PC-3 (cell line): ENCODE measurements at regions of chr2 and their contacts with region 1.

Region 1: DNA sequence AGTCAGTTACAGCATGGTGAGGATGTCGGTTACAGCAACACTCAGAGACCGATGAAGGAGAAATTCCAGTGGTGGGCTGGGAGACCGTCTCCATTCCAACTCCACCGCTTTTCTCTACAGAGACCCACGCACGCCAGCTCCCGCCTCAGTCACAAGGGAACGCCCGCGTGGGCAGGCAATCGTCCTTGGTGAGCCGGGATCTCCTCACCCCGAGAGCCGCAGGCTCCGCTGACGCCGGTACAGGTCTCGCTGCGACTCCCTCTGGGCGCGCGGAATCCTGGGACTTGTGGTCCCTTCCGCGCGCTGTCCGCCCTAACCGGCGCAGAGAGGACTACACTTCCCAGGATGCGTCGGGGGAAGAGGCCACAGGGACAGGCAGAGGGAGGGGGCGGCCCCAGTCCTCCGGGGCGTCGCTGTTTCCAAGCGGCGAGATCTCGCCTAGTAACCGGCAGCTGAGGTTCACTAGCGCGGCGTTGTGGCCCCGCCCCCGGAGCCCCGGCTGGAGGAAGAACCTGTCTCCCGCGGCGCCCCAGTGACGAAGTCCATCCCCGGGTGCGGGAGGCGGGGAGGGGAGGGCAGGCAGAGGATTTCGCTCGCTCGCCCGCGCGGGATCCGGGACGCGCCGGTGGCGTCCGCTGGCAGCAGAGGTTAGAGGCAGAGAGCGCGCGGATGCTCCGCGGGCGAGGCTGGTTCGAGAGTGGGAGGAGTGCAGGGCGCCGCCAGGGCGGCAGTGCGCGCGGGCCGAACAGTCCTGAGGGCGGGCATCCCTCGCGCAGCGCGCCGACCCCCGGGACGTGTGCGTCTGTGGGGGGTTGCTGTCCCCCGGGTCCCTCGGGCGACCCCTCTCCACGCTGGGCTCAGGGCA is at the start of gene EML6:
- DNase-seq: peak; percentile 99
- ATAC-seq: peak; percentile 95
- H3K4me3 ChIP-seq: peak within 1 kb of the TSS; percentile 83
- H3K27ac ChIP-seq: peak within 1 kb of the TSS; percentile 46
- H3K4me1 ChIP-seq: peaks cover 26% of the 10 kb centered on the region
- H3K27me3 ChIP-seq: no peaks in the 10 kb centered on the region
- CTCF ChIP-seq: peak; percentile 38
- total RNA-seq, gene EML6: 5.3 and 15.7 TPM in 2 replicates

Region 2: DNA sequence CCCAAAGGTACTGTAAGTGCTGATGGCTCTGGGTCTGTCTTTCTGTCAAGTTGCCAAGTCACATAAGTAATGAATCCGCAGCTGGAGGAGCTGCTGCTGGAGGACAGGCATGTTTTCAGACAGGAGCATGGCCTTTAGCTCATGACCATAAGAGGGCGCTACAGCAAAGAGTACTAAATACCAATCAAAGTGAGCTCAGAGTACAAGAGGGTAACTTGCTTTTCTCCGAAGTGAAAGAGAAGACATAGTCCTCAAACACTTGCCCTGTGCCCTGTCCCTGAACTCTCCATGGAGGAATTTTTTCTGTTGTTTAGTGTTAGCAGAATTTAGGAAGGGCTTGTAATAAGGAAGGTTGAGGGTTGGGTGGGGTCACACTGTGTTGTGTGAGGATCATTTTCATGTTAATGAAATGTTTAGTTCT is 57.9 kb before region 1 on chr2:
- CTCF ChIA-PET with region 1: no interaction called
- POLR2A ChIA-PET with region 1: no interaction called
- intact Hi-C with region 1: no loop called
- DNase-seq: peak; percentile 61
- ATAC-seq: peak; percentile 63; the same call in 1 of the 2 replicates
- H3K4me3 ChIP-seq: no peak overlapping the region
- H3K27ac ChIP-seq: peak overlapping the region; percentile 26
- H3K4me1 ChIP-seq: peaks cover 15% of the 10 kb centered on the region
- H3K27me3 ChIP-seq: no peaks in the 10 kb centered on the region
- CTCF ChIP-seq: peak; percentile 83

Region 3: DNA sequence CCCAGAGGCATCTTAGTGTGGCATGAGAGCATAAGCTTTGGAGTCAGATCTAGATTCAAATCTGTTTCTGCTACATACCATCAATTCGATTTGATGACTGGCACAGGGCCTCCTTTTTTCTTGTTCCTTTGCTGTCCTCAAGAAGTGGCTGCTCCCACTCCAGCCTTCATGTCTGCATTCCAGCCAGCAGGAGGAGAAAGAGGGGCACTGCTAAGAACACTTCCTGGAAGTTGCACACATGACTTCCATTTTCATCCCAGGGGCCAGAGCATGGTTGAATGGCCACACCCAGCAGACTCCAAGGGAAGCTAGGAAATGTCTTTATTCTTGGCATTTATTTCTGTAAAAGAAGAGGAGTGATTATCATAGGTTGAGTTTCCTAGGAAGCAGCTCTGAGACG is 50.5 kb after region 1 on chr2:
- CTCF ChIA-PET with region 1: interaction called, 5 read pairs
- POLR2A ChIA-PET with region 1: no interaction called
- intact Hi-C with region 1: loop called (anchors 2 kb)
- DNase-seq: peak; percentile 40
- ATAC-seq: no peak
- H3K4me3 ChIP-seq: no peak overlapping the region
- H3K27ac ChIP-seq: peak overlapping the region; percentile 92; the same call in 1 of the 2 replicates
- H3K4me1 ChIP-seq: peaks cover 31% of the 10 kb centered on the region
- H3K27me3 ChIP-seq: no peaks in the 10 kb centered on the region
- CTCF ChIP-seq: peak; percentile 52

Region 4: DNA sequence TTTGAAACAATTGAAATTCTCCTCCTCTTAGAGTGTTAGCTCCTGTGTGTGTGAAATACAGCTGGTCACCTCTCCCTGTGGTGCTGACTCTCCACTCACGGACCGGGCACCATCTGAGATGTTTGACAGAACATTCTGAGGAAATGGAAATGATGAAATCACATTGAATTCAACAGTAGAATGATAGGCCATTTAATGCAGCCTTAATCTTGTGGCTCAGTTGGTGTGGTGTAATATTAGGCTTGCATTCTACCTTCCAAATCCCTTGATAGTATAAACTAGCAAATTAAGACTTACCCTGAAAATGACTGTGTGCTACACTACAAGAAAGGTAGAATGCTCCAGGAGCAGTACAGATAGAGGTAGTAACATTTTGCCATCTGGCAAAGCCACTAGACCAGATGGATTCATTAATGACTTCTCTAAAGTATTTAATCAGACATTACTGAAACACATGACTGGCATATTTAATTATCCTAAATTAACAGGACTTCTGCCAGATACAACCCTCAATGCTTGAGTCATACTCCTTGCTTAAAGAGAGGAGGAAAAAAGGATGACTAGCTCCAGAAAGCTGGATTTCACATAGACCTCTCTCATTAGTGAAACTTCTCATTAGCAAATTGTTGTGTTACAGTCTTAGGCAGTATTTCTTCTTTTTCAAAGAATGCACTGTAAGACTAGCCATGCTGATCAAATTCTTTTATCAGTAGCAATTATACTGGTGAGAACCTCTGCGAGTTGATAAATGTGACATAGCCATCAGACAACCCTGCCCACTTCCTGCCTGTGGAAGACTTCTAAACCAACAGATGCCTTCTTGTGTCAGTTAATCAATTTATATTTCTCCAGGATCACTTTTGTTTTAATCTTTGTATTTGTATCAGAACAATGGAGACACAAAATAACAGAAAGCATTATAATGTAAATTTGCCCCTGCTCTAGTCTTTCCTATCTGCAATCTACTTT is 80.7 kb after region 1 on chr2:
- CTCF ChIA-PET with region 1: no interaction called
- POLR2A ChIA-PET with region 1: no interaction called
- intact Hi-C with region 1: no loop called
- DNase-seq: no peak
- ATAC-seq: no peak
- H3K4me3 ChIP-seq: no peak overlapping the region
- H3K27ac ChIP-seq: no peak overlapping the region
- H3K4me1 ChIP-seq: no peaks in the 10 kb centered on the region
- H3K27me3 ChIP-seq: no peaks in the 10 kb centered on the region
- CTCF ChIP-seq: no peak

Region 5: GRCh38 chr2:55010149-55010591 is 286.8 kb after region 1 on chr2:
- CTCF ChIA-PET with region 1: no interaction called
- POLR2A ChIA-PET with region 1: no interaction called
- intact Hi-C with region 1: loop called (anchors 10 kb)
- DNase-seq: peak; percentile 31
- ATAC-seq: peak; percentile 35
- H3K4me3 ChIP-seq: no peak overlapping the region
- H3K27ac ChIP-seq: no peak overlapping the region
- H3K4me1 ChIP-seq: peaks cover 54% of the 10 kb centered on the region
- H3K27me3 ChIP-seq: no peaks in the 10 kb centered on the region
- CTCF ChIP-seq: no peak

Region 6: DNA sequence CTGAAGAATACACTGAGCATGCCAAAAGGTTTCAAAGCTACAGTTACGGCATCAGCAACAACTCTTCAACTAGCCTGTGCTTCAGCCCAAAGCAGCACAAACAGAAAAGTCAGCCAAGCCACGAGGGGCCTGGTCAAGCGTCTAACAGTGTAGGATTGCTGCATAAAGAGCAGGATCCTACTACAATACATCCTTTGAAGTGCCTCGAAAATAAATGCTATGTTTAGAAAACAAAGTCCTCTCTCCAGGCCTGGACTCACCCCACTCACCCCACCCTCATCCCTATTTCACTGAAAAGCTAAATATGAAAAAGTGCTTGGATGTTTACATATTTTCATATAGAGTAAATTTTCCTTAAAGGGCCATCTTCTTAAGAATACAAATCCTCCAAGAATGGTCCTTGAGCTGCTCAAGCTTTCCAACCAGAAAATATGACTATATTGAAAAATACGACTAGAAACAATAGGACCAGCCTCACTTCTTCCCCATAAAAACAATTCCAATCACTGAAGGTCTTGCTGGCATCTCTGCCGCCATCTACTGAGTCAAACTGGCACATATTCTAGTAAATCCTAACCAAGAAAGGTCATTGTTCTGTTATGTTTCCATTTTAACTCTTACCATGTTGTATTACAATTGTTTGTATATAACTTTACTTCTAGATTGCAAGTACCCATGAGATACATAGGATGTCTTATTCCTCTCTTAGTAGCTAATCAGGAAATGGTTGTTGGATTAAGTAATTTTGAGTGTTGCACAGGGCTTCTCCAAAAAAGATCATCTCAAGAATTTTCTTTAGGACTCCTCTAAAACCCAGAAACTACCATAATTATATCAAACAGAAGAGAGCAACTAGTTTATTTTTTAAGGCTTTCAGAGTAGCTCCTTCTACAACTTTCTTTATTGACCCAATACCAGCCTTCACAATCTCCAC is 445.1 kb after region 1 on chr2:
- CTCF ChIA-PET with region 1: no interaction called
- POLR2A ChIA-PET with region 1: no interaction called
- intact Hi-C with region 1: loop called (anchors 10 kb)
- DNase-seq: peak; percentile 77
- ATAC-seq: peak; percentile 60
- H3K4me3 ChIP-seq: no peak overlapping the region
- H3K27ac ChIP-seq: no peak overlapping the region
- H3K4me1 ChIP-seq: peaks cover 23% of the 10 kb centered on the region
- H3K27me3 ChIP-seq: no peaks in the 10 kb centered on the region
- CTCF ChIP-seq: peak; percentile 92